PC-3 (cell line): ENCODE measurements at regions of chr6 and their contacts with region 1.

Region 1: GRCh38 chr6:89630488-89630887 is 8.1 kb downstream of the LYRM2 start:
- DNase-seq: no peak
- ATAC-seq: no peak
- H3K4me3 ChIP-seq: no peak overlapping the region
- H3K27ac ChIP-seq: no peak overlapping the region
- H3K4me1 ChIP-seq: no peaks in the 10 kb centered on the region
- H3K27me3 ChIP-seq: no peaks in the 10 kb centered on the region
- CTCF ChIP-seq: no peak

Region 2: GRCh38 chr6:89792873-89793272 is 162.4 kb after region 1 on chr6:
- CTCF ChIA-PET with region 1: no interaction called
- POLR2A ChIA-PET with region 1: no interaction called
- intact Hi-C with region 1: no loop called
- DNase-seq: peak; percentile 44
- ATAC-seq: peak; percentile 70
- H3K4me3 ChIP-seq: no peak overlapping the region
- H3K27ac ChIP-seq: no peak overlapping the region
- H3K4me1 ChIP-seq: no peaks in the 10 kb centered on the region
- H3K27me3 ChIP-seq: no peaks in the 10 kb centered on the region
- CTCF ChIP-seq: peak; percentile 52

Region 3: GRCh38 chr6:89829591-89830385 is 199.3 kb after region 1 on chr6 and contains the start of gene CASP8AP2:
- CTCF ChIA-PET with region 1: no interaction called
- POLR2A ChIA-PET with region 1: interaction called, 25 read pairs
- intact Hi-C with region 1: no loop called
- DNase-seq: peak; percentile 97
- ATAC-seq: peak; percentile 97
- H3K4me3 ChIP-seq: peak within 1 kb of the TSS; percentile 87
- H3K27ac ChIP-seq: peak within 1 kb of the TSS; percentile 2; the same call in 1 of the 2 replicates
- H3K4me1 ChIP-seq: no peaks in the 10 kb centered on the region
- H3K27me3 ChIP-seq: no peaks in the 10 kb centered on the region
- CTCF ChIP-seq: no peak
- total RNA-seq, gene CASP8AP2: 6.6 and 7.8 TPM in 2 replicates